ENCODE measurements at regions of chr2 and their contacts with region 1.

Region 1: GRCh38 chr2:73828818-73829570 is at the start of gene STAMBP:
- DNase-seq: peak; percentile 95
- ATAC-seq: peak; percentile 92
- H3K4me3 ChIP-seq: peak within 1 kb of the TSS; percentile 73 to 95
- H3K27ac ChIP-seq: peak within 1 kb of the TSS; percentile 79
- H3K4me1 ChIP-seq: peaks cover 11 to 32% of the 10 kb centered on the region in 2 experiments; a peak in 3 of 4 replicates
- H3K27me3 ChIP-seq: no peaks in the 10 kb centered on the region
- CTCF ChIP-seq: no peak
- POLR2A ChIP-seq: no peak
- RAD21 ChIP-seq: no peak
- total RNA-seq, gene STAMBP: 45.2 TPM

Region 2: DNA sequence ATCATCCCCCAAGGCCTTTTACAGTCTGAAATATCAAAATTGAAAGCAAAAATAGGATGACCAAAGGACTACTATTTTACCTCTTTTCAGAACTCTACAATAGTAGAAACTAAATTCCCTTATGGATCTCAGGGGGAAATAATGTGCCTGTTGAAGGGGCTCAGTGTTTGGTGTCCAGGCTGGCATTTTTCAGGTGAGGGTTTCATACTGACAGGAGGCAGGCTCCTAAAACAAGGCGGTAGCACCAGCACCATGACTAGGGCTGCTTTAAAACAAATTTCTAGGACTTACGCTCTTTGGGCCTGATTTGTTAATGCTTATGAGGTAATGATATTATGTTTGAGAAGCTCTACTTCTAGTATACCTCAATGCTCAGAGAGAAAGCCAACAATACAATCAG is 324.0 kb after region 1 on chr2:
- CTCF ChIA-PET with region 1: interaction called, 39 read pairs
- POLR2A ChIA-PET with region 1: interaction called, 4 read pairs
- RAD21 ChIA-PET with region 1: interaction called, 4 to 6 read pairs
- intact Hi-C with region 1: loop called (anchors 1 kb)
- DNase-seq: no peak
- ATAC-seq: no peak
- H3K4me3 ChIP-seq: no peak overlapping the region
- H3K27ac ChIP-seq: no peak overlapping the region
- H3K4me1 ChIP-seq: peaks cover 3 to 5% of the 10 kb centered on the region in 2 experiments; a peak in 2 of 4 replicates
- H3K27me3 ChIP-seq: no peaks in the 10 kb centered on the region
- CTCF ChIP-seq: no peak
- POLR2A ChIP-seq: no peak
- RAD21 ChIP-seq: no peak

Region 3: DNA sequence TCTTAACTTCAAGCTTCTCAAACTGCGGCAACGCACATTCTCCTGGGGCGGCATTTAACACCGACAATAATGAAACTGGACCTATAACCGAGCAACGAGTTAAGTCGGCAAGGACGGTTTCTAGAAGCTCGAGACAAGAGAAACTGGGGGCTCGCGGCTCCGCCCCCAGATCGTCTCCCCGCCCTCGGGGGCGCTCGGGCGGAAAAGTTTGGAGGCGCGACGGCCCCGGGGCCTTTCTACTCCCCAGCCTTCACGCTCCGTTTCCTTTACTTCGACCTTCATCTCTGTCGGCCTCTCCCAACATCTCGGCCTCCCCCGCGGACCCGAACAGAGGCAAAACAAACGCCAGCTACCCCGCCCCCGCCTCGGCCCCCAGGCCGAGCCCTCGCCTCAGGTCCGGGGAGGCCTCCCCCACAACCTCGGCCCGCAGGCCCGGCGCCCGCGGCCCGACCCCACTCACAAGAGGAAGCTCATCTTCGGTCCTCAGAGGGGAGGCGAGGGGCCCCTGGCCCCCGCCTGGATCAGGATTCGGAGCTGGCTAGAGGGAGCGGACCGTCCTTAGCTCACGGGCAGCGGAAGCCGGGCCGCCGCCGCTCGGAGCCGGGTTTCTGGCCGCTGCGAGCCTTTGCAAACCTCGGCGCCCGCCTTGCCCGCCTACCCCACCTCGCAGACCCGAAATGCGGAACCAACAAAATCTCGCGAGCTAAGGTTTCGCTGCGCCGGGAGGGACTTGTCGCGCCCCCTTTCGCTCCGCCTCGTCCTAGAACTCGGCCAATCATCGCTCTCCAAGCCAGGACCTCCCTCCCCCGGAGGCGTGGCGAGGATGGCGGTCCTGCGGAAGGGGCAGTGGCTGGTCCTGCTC is 349.4 kb after region 1 on chr2 and contains the start of gene MOB1A:
- CTCF ChIA-PET with region 1: interaction called, 12 read pairs
- POLR2A ChIA-PET with region 1: interaction called, 4 read pairs
- RAD21 ChIA-PET with region 1: interaction called in 1 of 2 experiments, 3 read pairs
- intact Hi-C with region 1: no loop called
- DNase-seq: peak; percentile 94
- ATAC-seq: peak; percentile 97
- H3K4me3 ChIP-seq: peak within 1 kb of the TSS; percentile 79 to 91
- H3K27ac ChIP-seq: peak within 1 kb of the TSS; percentile 95
- H3K4me1 ChIP-seq: peaks cover 8 to 17% of the 10 kb centered on the region in 2 experiments; a peak in 3 of 4 replicates
- H3K27me3 ChIP-seq: no peaks in the 10 kb centered on the region
- CTCF ChIP-seq: no peak
- POLR2A ChIP-seq: peak; percentile 84
- RAD21 ChIP-seq: no peak
- total RNA-seq, gene MOB1A: 132 TPM

Measured in HCT116 (cell line).